ENCODE measurements at regions of chr1 and their contacts with region 1.

Region 1: DNA sequence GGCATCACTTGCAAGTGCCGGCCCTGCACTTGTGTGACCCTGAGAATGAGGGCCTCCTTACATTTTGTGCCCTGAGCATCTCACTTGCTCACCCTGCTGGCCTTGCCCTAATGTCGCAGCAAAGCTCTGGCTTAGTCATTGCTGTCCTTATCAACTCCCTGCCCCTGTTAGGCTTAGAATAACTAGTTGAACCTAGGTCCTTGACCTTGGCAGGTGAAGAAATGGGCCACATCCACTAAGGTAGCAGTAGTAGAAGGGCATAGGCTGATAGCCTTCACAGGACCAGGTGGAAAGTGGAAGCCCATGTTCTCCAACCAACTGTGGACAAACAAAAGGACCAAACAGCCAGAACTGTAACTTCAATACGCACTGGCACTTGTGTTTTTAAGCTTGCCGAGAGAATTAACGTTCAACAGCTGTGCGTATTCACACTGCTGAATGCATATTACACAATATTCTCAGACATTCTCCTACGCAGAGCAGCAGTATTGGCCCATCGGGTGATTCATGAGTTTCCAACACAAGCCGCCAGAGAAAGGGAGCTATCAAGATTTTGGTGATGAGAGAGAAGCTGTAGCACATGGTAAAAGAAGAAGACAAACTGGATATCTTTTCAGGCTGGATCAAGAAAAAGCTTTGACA is 27.7 kb upstream of the PTGFRN start:
- DNase-seq: peak in 4 of 5 donors; percentile 30 to 78 (median 54)
- H3K4me3 ChIP-seq: no peak overlapping the region
- H3K27ac ChIP-seq: peak overlapping the region in 1 of 2 donors; percentile 30
- H3K4me1 ChIP-seq: peaks cover 5% of the 10 kb centered on the region
- H3K27me3 ChIP-seq: no peaks in the 10 kb centered on the region
- CTCF ChIP-seq: no peak
- EP300 ChIP-seq: peak; percentile 66
- POLR2A ChIP-seq: no peak

Region 2: DNA sequence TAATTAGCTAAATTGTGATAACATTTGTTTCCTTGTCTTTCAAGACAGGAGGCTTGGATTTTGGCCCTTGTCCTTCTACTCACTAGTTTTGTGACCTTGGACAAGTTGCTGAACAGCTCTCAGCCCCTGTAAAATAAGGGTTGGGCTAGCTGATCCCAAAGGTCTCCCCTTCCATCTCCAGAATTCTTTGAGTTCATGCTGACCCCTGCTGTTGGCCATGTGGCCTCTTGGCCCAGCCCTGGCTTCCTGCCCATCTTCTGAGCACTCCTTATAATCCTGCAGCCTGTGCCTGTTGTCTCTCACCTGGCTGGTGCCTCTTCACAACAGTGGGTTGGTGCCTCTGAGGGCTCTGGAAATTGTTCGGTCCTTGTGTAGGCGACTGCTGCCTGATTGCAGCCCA is 37.8 kb after region 1 on chr1:
- intact Hi-C with region 1: loop called in 1 of 4 experiments (anchors 10 kb)
- DNase-seq: no peak
- H3K4me3 ChIP-seq: no peak overlapping the region
- H3K27ac ChIP-seq: no peak overlapping the region
- H3K4me1 ChIP-seq: peaks cover 15% of the 10 kb centered on the region
- H3K27me3 ChIP-seq: no peaks in the 10 kb centered on the region
- CTCF ChIP-seq: no peak
- EP300 ChIP-seq: no peak
- POLR2A ChIP-seq: no peak

Region 3: DNA sequence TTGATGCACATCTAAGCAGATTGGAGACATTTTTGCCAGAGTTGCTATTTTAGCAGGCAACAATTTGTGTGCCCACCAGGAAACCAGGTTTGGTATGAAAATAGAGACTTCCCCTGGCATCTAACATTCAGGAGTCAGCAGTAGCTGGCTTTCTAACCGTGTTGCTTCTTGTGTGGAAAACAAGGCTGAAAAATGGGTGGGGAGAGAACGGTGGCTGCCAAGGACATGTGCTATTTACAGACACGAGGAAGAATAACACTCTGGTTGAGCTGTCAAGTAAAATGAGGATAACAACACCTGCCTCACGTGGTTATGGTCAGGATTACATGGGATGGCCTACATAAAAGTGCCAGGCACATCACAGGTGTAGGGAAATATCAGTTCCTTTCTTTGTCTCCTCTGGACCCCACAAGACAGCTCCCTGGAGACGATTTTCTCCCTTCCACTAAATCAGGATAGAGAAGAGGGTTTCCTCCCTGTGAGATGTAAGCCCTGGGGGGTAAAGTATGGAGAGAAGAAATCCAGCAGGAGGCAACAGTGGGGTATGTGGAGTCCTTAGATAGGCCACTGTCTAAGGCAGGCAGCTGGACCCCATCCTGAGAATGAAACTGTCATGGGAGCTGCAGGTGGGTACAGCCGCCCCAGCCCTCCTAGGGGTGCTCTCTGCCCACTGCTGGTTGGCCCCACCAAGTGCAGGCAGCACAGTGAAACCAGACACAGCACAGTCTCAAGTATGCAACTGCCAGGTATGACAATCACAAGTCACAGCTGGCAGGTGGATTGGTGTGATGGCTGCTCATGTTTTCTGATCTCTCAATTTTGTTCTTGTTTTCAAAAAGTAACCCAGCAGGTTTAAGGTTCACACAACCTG is 804.2 kb after region 1 on chr1:
- intact Hi-C with region 1: loop called in 1 of 4 experiments (anchors 10 kb)
- DNase-seq: peak in 1 of 5 donors; percentile 41
- H3K4me3 ChIP-seq: no peak overlapping the region
- H3K27ac ChIP-seq: peak overlapping the region in 1 of 2 donors; percentile 42
- H3K4me1 ChIP-seq: peaks cover 15% of the 10 kb centered on the region
- H3K27me3 ChIP-seq: peaks cover 2% of the 10 kb centered on the region
- CTCF ChIP-seq: no peak
- EP300 ChIP-seq: no peak
- POLR2A ChIP-seq: no peak

Measured in ovary (tissue), 10 donors.